Testis (tissue), 5 donors: ENCODE measurements at regions of chr9 and their contacts with region 1.

Region 1: DNA sequence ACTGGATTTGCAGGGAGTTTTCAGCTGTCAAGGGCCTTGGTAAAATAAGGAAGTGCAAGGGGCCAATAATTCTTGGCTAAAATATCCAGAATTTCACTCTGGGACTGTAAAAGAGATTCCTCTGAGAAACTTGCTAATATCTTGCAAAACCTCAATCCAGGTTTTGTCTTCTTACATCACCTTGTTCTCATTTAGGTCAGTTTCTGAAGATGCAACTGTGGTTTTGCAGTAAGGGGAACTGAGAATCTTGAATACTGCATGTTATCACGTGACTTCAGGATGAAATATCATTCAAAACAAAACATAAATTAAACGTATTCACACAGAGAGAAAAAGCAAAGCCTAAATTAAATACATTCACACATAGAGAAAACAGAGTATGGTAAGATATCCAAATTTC is 35.0 kb upstream of the RIC1 start:
- DNase-seq: no peak
- H3K4me3 ChIP-seq: no peak overlapping the region
- H3K27ac ChIP-seq: no peak overlapping the region
- H3K4me1 ChIP-seq: no peaks in the 10 kb centered on the region
- H3K27me3 ChIP-seq: no peaks in the 10 kb centered on the region
- CTCF ChIP-seq: no peak
- POLR2A ChIP-seq: no peak

Region 2: DNA sequence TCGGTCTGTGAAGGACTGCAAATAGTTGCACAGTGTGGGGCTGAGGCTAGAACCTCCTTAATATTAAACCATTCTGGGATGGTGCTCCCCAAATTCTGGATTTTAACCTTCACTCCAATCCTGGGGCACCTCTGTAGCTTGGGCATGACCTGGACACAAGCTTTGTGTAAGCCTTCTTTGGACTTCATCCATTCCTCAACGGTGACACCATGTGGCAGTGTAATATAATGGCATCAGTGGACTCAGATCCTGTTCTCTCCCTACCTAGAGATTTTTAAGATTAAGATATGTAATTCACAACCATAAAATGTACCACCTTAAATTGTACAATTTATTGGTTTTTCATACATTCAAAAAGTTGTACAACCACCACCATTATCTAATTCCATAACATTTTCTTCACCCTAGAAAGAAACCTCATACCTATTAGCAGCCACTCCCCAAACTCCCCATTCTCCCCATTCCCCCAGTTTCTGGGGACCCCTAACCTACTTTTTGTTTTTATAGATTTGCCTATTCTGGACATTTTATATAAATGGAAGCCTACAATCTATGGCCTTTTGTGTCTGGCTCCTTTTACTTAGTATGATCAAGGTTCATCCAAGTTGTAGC is 151.4 kb before region 1 on chr9:
- intact Hi-C with region 1: loop called (anchors 10 kb)
- DNase-seq: peak; percentile 52
- H3K4me3 ChIP-seq: no peak overlapping the region
- H3K27ac ChIP-seq: no peak overlapping the region
- H3K4me1 ChIP-seq: peaks cover 5% of the 10 kb centered on the region
- H3K27me3 ChIP-seq: no peaks in the 10 kb centered on the region
- CTCF ChIP-seq: peak in 2 of 3 experiments; percentile 40 to 41
- POLR2A ChIP-seq: no peak